Caco-2 (cell line): ENCODE measurements at regions of chr20 and their contacts with region 1.

Region 1: DNA sequence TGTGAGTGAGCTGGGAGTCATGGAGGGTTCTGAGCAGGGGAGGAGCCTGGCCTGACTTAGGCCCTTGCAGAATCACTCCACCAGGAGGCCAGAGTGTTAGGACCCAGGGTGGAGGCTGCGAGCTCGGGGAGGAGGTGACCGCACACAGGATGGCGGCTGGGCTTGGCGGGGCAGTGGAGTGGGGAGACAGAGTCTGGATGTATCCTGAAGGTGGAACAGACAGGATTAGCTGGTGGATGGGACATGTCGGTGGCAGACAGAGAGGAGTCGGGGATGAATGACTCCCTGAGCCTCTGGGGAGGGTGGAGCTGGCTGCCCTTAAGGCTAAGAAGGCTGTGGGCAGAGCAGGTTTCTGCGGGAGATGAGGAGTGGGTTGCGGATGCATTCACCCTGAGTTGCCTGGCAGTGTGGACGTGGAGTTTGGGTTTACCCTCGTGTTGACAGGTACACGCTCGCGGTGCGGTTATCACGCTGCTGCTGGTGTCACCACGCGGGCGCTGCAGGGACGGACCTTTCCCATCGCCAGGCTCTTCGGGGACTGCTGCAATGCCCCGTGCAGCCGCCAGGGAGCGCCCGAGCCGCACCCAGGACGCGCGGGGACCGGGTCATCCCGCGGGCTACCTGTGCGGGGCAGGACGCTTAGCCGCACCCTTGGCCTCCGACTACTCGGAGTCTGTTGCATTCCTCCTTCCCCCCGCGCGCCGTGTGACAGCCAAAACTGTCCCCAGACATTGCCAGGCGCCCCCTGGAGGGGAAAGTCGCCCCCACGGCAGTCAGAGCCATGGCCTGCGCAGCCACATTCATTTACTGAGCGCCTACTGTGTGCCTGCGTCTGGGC is 43.0 kb upstream of the PTGIS start:
- DNase-seq: peak; percentile 98 to 100
- H3K4me3 ChIP-seq: peak overlapping the region; percentile 34
- H3K4me3 Mint-ChIP-seq: peak overlapping the region; percentile 76
- H3K27ac Mint-ChIP-seq: peak overlapping the region; percentile 5
- H3K4me1 ChIP-seq: peaks cover 7% of the 10 kb centered on the region
- H3K4me1 Mint-ChIP-seq: peaks cover 19% of the 10 kb centered on the region
- H3K27me3 ChIP-seq: no peaks in the 10 kb centered on the region
- H3K27me3 Mint-ChIP-seq: no peaks in the 10 kb centered on the region
- CTCF ChIP-seq: peak; percentile 100

Region 2: DNA sequence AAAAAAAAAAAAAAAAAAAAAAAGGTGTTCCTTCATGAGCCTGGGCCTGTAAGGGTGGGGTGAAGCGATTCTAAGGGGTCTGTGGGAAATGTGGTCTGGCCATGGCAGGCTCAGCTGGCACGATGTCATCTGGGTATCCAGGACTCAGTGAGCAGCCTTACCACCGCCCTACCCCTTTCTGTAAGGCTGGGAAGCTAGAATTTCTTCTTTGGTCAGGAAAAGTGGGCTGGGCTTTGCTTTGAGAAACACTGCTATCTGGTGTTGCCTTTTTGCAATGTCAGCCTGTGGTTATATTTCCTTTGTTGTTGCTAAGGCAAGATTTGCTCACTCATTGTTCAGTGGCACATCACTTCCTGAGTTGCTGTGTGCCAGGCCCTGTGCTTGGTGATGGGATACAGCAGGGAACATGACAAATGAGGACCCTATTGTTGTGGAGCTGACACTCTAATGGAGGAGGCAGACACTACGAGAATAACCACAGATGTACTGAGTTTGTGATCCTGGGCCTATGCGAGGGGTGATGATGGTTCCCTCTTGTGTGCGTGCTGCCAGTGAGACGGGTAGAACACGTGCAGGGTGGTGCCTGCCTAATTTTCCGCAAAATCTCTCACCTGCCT is 287.2 kb before region 1 on chr20:
- CTCF ChIA-PET with region 1: interaction called, 17 read pairs
- POLR2A ChIA-PET with region 1: no interaction called
- intact Hi-C with region 1: no loop called
- DNase-seq: peak in 1 of 2 experiments; percentile 70
- H3K4me3 ChIP-seq: no peak overlapping the region
- H3K4me3 Mint-ChIP-seq: no peak overlapping the region
- H3K27ac Mint-ChIP-seq: no peak overlapping the region
- H3K4me1 ChIP-seq: no peaks in the 10 kb centered on the region
- H3K4me1 Mint-ChIP-seq: no peaks in the 10 kb centered on the region
- H3K27me3 ChIP-seq: peaks cover 2% of the 10 kb centered on the region; the same call in 1 of the 2 replicates
- H3K27me3 Mint-ChIP-seq: peaks cover 19% of the 10 kb centered on the region
- CTCF ChIP-seq: peak; percentile 55 to 61

Region 3: GRCh38 chr20:49557449-49557848 is 53.5 kb before region 1 on chr20:
- CTCF ChIA-PET with region 1: interaction called, 22 read pairs
- POLR2A ChIA-PET with region 1: no interaction called
- intact Hi-C with region 1: no loop called
- DNase-seq: no peak
- H3K4me3 ChIP-seq: no peak overlapping the region
- H3K4me3 Mint-ChIP-seq: no peak overlapping the region
- H3K27ac Mint-ChIP-seq: no peak overlapping the region
- H3K4me1 ChIP-seq: peaks cover 43% of the 10 kb centered on the region
- H3K4me1 Mint-ChIP-seq: peaks cover 24% of the 10 kb centered on the region
- H3K27me3 ChIP-seq: no peaks in the 10 kb centered on the region
- H3K27me3 Mint-ChIP-seq: no peaks in the 10 kb centered on the region
- CTCF ChIP-seq: no peak

Region 4: GRCh38 chr20:49676581-49677291 is 65.8 kb after region 1 on chr20:
- CTCF ChIA-PET with region 1: interaction called, 10 read pairs
- POLR2A ChIA-PET with region 1: no interaction called
- intact Hi-C with region 1: loop called (anchors 1 kb)
- DNase-seq: peak in 1 of 2 experiments; percentile 33
- H3K4me3 ChIP-seq: no peak overlapping the region
- H3K4me3 Mint-ChIP-seq: peak overlapping the region; percentile 72
- H3K27ac Mint-ChIP-seq: peak overlapping the region; percentile 98
- H3K4me1 ChIP-seq: peaks cover 92% of the 10 kb centered on the region
- H3K4me1 Mint-ChIP-seq: peaks cover 77% of the 10 kb centered on the region
- H3K27me3 ChIP-seq: no peaks in the 10 kb centered on the region
- H3K27me3 Mint-ChIP-seq: no peaks in the 10 kb centered on the region
- CTCF ChIP-seq: no peak

Region 5: GRCh38 chr20:49812463-49813304 is 201.8 kb after region 1 on chr20 and contains the start of gene SLC9A8:
- CTCF ChIA-PET with region 1: interaction called, 12 read pairs
- POLR2A ChIA-PET with region 1: no interaction called
- intact Hi-C with region 1: loop called (anchors 1 kb)
- DNase-seq: peak; percentile 97 to 98
- H3K4me3 ChIP-seq: peak within 1 kb of the TSS; percentile 68
- H3K4me3 Mint-ChIP-seq: peak within 1 kb of the TSS; percentile 97
- H3K27ac Mint-ChIP-seq: peak within 1 kb of the TSS; percentile 96
- H3K4me1 ChIP-seq: peaks cover 25% of the 10 kb centered on the region
- H3K4me1 Mint-ChIP-seq: peaks cover 41% of the 10 kb centered on the region
- H3K27me3 ChIP-seq: no peaks in the 10 kb centered on the region
- H3K27me3 Mint-ChIP-seq: no peaks in the 10 kb centered on the region
- CTCF ChIP-seq: peak; percentile 38 to 44
- total RNA-seq, gene SLC9A8: 19.5 and 21.4 TPM in 2 replicates

Region 6: GRCh38 chr20:49909499-49910339 is 298.8 kb after region 1 on chr20:
- CTCF ChIA-PET with region 1: interaction called, 10 read pairs
- POLR2A ChIA-PET with region 1: no interaction called
- intact Hi-C with region 1: no loop called
- DNase-seq: peak in 1 of 2 experiments; percentile 58
- H3K4me3 ChIP-seq: no peak overlapping the region
- H3K4me3 Mint-ChIP-seq: no peak overlapping the region
- H3K27ac Mint-ChIP-seq: peak overlapping the region; percentile 33
- H3K4me1 ChIP-seq: 0 out of 2 replicates have a peak, but pooled peaks cover 3% of the 10 kb centered on the region
- H3K4me1 Mint-ChIP-seq: peaks cover 14% of the 10 kb centered on the region
- H3K27me3 ChIP-seq: no peaks in the 10 kb centered on the region
- H3K27me3 Mint-ChIP-seq: no peaks in the 10 kb centered on the region
- CTCF ChIP-seq: peak; percentile 58 to 60

Region 7: DNA sequence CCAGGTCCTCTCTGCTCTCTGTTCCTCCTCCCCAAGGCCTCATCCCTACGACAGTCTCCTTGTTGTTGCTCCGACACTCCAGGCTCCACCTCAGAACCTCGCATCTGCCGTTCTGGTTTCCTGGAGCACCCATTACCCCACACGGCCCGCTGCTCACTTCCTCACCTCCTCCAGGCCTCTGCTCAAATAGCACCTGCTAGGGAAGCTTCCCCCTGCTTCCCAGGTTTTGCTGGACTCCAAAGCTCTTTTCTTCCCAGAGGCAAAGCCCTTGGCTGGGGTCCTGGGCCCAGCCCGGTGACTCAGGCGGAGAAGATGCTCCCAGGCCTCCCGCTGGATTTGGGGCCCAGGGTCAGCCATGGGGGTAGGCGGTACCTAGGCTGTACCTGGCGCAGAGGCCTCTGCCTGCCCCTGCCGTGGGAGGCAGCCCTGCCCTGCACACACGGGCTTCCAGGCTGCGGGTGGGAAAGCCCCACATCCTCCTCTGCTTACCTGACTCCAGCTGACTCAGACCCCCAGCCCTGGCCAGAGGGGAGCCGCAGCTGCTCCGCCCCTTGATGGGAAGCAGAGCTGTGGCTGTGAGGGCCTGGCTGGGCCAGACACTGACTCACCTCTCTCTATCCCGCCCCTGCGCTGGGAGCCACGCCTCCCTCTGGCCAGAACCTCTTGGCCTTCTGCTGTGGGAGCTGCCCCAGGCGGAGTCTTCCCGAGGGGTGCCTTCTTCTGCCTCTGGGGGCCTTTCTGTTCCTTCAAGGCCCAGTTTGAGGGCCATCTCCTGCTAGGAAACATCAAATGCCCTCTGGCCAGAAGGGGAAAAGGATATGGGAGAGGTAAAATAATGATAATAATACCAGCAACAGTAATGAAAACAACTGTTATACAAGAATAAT is 710.2 kb after region 1 on chr20:
- CTCF ChIA-PET with region 1: no interaction called
- POLR2A ChIA-PET with region 1: no interaction called
- intact Hi-C with region 1: no loop called
- DNase-seq: peak; percentile 75 to 85
- H3K4me3 ChIP-seq: no peak overlapping the region
- H3K4me3 Mint-ChIP-seq: no peak overlapping the region
- H3K27ac Mint-ChIP-seq: peak overlapping the region; percentile 1
- H3K4me1 ChIP-seq: peaks cover 15% of the 10 kb centered on the region
- H3K4me1 Mint-ChIP-seq: peaks cover 14% of the 10 kb centered on the region
- H3K27me3 ChIP-seq: no peaks in the 10 kb centered on the region
- H3K27me3 Mint-ChIP-seq: no peaks in the 10 kb centered on the region
- CTCF ChIP-seq: no peak